GM23248 (cell line): ENCODE measurements at regions of chr10 and their contacts with region 1.

Region 1: GRCh38 chr10:96765406-96766240 is 45.3 kb upstream of the PIK3AP1 start:
- DNase-seq: peak; percentile 77
- H3K4me3 ChIP-seq: no peak overlapping the region
- H3K27ac ChIP-seq: no peak overlapping the region
- H3K4me1 ChIP-seq: no peaks in the 10 kb centered on the region
- H3K27me3 ChIP-seq: no peaks in the 10 kb centered on the region

Region 2: DNA sequence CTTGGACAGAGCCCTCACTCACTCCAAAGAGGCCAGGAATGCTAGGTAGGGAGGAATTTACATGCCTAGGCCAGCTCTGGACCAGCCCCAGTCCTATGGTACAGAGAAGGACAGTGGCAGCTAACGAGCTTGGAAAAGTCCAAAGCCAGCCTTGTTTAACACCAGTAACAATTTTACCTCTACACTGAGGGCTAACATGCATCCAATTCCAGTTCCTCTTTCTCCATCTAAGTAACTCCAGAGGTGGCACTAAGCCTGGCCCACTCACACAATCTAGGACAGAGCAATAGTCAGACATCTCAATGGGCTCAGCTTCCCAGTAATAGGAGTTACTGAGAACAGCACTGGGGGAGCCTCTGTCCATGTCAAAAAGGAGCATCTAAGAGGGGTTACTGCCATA is 60.8 kb after region 1 on chr10:
- in situ Hi-C with region 1: loop called (anchors 10 kb)
- DNase-seq: no peak
- H3K4me3 ChIP-seq: no peak overlapping the region
- H3K27ac ChIP-seq: no peak overlapping the region
- H3K4me1 ChIP-seq: peaks cover 8% of the 10 kb centered on the region; the same call in 1 of the 2 replicates
- H3K27me3 ChIP-seq: no peaks in the 10 kb centered on the region